ENCODE measurements at regions of chr3 and their contacts with region 1.

Region 1: DNA sequence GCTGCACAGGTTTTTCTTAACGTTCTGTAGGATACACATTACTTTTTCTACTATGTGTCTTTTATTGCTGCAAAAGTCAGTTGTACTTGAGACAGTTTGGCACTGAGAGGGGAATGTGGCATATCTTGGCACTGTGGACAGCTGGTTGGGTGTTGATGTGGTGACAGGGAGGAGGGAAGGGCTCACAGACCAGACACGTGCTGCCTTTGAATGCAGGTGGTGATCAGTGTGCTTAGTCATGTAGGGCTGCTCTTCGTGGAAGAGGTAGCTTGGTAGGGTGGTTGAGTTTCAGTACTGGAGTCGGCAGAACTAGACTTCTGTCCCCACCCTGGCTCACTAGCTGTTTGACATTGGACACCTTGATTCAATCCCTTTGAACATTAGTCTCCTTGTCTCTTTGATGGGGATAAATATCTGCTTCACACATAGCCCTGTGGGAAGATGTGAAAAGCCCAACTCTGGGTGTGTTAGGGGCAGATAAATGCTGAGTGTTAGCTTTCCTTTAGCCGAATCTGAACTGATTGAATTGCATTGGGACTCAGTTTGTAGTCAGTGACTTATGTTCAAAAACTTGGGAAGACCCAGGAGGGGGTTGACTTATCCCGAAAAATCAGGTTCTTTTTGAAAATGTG is 108.4 kb downstream of the PTPRG start:
- DNase-seq: no peak
- ATAC-seq: peak; percentile 90
- H3K4me3 ChIP-seq: no peak overlapping the region
- H3K27ac ChIP-seq: no peak overlapping the region
- H3K4me1 ChIP-seq: no peaks in the 10 kb centered on the region
- H3K27me3 ChIP-seq: no peaks in the 10 kb centered on the region
- CTCF ChIP-seq: no peak
- EP300 ChIP-seq: no peak
- POLR2A ChIP-seq: no peak
- RAD21 ChIP-seq: no peak

Region 2: GRCh38 chr3:61429106-61429505 is 240.7 kb before region 1 on chr3:
- CTCF ChIA-PET with region 1: no interaction called
- POLR2A ChIA-PET with region 1: no interaction called
- RAD21 ChIA-PET with region 1: no interaction called
- SMC1A ChIA-PET with region 1: no interaction called
- in situ Hi-C with region 1: no loop called
- intact Hi-C with region 1: no loop called
- DNase-seq: no peak
- ATAC-seq: no peak
- H3K4me3 ChIP-seq: no peak overlapping the region
- H3K27ac ChIP-seq: no peak overlapping the region
- H3K4me1 ChIP-seq: no peaks in the 10 kb centered on the region
- H3K27me3 ChIP-seq: no peaks in the 10 kb centered on the region
- CTCF ChIP-seq: no peak
- EP300 ChIP-seq: no peak
- POLR2A ChIP-seq: no peak
- RAD21 ChIP-seq: no peak

Region 3: DNA sequence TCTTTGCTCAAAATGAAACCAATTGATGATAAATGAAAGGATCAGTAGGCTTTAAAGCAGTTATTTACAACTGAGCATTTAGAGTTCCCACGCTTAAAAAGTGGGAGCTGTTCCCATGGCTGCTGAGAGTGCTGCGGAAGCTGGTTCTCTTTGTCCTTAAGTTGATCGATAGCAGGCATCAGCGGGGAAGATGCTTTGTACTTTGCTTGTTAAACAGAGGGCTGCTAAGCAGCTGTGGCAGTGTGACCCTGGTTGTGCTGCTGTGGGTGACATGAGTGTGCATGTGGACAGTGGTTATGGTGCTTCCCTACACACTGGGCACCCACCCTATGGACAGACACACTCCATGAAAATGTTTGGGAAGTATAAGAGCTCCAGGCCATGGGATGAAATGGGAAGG is 12.1 kb before region 1 on chr3:
- CTCF ChIA-PET with region 1: interaction called, 3 read pairs
- POLR2A ChIA-PET with region 1: interaction called, 5 read pairs
- RAD21 ChIA-PET with region 1: interaction called, 3 read pairs
- SMC1A ChIA-PET with region 1: interaction called, 16 read pairs
- in situ Hi-C with region 1: no loop called
- intact Hi-C with region 1: no loop called
- DNase-seq: no peak
- ATAC-seq: 0 out of 3 replicates have a peak, but pooled peaks have one; percentile 18
- H3K4me3 ChIP-seq: no peak overlapping the region
- H3K27ac ChIP-seq: no peak overlapping the region
- H3K4me1 ChIP-seq: no peaks in the 10 kb centered on the region
- H3K27me3 ChIP-seq: no peaks in the 10 kb centered on the region
- CTCF ChIP-seq: no peak
- EP300 ChIP-seq: no peak
- POLR2A ChIP-seq: no peak
- RAD21 ChIP-seq: no peak

Region 4: DNA sequence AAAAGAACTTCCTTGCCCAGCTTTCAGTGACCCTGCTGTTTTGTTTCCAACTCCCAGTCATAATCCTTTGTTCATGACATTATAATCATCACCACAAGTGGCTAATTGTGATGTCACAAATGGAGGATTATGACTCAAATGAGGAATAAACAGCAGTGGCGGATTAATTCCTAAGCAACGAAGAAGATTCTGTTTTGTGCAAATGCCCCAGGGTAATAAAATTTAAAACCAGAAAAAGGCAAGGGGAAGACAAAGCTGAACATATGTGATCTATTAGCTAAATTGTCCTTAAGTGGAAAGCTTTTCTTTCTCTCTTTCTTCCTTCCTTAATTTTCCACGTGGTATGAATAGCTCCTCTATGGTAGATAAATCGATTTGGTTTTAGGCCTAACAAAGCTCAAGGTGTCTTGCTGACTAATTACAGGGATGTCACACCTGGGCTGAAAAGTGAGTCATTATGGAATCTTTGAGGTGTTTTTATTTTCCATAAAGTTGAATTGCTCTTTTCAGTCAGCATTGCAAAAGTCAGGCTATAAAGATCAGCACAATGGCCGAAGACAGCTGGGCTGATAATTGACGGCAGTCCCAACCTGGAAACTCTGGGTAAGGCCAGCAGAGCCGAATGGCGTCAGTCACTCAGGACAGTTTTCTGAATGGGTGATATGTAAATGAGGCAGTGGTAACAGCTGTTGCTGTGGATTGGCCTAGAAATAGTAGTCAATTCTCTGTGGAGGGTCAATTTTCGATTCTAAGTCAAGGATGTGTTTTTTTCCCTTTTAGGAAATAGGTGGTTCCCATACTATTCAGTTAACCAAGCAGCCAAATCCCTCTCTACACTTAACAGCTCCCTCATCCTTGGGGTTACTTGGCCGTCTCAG is 13.1 kb after region 1 on chr3:
- CTCF ChIA-PET with region 1: interaction called, 7 read pairs
- POLR2A ChIA-PET with region 1: interaction called, 10 read pairs
- RAD21 ChIA-PET with region 1: interaction called, 14 read pairs
- SMC1A ChIA-PET with region 1: interaction called, 34 read pairs
- in situ Hi-C with region 1: no loop called
- intact Hi-C with region 1: no loop called
- DNase-seq: no peak
- ATAC-seq: peak; percentile 57
- H3K4me3 ChIP-seq: no peak overlapping the region
- H3K27ac ChIP-seq: no peak overlapping the region
- H3K4me1 ChIP-seq: no peaks in the 10 kb centered on the region
- H3K27me3 ChIP-seq: no peaks in the 10 kb centered on the region; a peak in 1 of 4 replicates
- CTCF ChIP-seq: no peak
- EP300 ChIP-seq: 0 out of 4 replicates have a peak, but pooled peaks of 1 of the 2 experiments have one; percentile 51
- POLR2A ChIP-seq: no peak
- RAD21 ChIP-seq: no peak

Region 5: GRCh38 chr3:61699622-61700021 is 29.8 kb after region 1 on chr3:
- CTCF ChIA-PET with region 1: interaction called, 4 read pairs
- POLR2A ChIA-PET with region 1: interaction called, 3 read pairs
- RAD21 ChIA-PET with region 1: interaction called, 30 read pairs
- SMC1A ChIA-PET with region 1: interaction called, 17 read pairs
- in situ Hi-C with region 1: no loop called
- intact Hi-C with region 1: no loop called
- DNase-seq: no peak
- ATAC-seq: peak; percentile 31
- H3K4me3 ChIP-seq: no peak overlapping the region
- H3K27ac ChIP-seq: no peak overlapping the region
- H3K4me1 ChIP-seq: no peaks in the 10 kb centered on the region
- H3K27me3 ChIP-seq: no peaks in the 10 kb centered on the region
- CTCF ChIP-seq: no peak
- EP300 ChIP-seq: no peak
- POLR2A ChIP-seq: no peak
- RAD21 ChIP-seq: no peak

Measured in GM12878 (cell line).